Esophagus muscularis mucosa (tissue), 4 donors: ENCODE measurements at regions of chr2 and their contacts with region 1.

Region 1: DNA sequence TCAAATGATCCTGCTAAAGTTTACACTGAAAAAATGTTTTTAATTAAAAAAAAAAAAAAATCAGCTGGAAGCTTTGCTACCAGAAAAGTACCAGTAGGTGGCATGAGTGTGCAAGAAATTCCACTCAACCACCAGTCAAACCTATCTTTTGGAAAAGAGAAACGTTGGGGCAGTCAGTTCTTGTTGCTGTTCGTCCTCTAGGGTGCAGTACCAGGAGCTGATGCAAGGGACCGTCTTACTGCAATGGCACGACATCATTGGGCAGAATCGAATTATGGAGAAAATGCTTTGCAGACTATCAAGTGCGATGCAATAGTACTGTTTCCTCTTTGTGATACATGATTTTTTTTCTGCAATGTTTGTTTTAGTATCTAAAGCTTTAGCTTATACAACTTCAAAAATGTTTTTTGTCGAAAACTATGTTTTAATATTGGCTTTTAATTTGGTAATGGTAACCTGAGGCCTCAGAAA is 18.3 kb downstream of the YPEL5 start:
- DNase-seq: no peak
- H3K4me3 ChIP-seq: no peak overlapping the region
- H3K27ac ChIP-seq: peak overlapping the region in 2 of 4 donors; percentile 17 to 34
- H3K4me1 ChIP-seq: peaks cover 7 to 32% (median 25%) of the 10 kb centered on the region in 4 donors
- H3K27me3 ChIP-seq: no peaks in the 10 kb centered on the region
- CTCF ChIP-seq: peak; percentile 81 to 90 (median 85)
- EP300 ChIP-seq: no peak
- POLR2A ChIP-seq: no peak

Region 2: GRCh38 chr2:30201990-30202389 is 36.9 kb after region 1 on chr2:
- intact Hi-C with region 1: loop called (anchors 5 kb)
- DNase-seq: no peak
- H3K4me3 ChIP-seq: no peak overlapping the region
- H3K27ac ChIP-seq: peak overlapping the region in 3 of 4 donors; percentile 20 to 59 (median 35)
- H3K4me1 ChIP-seq: peaks cover 7 to 22% (median 19%) of the 10 kb centered on the region in 4 donors
- H3K27me3 ChIP-seq: no peaks in the 10 kb centered on the region
- CTCF ChIP-seq: no peak
- EP300 ChIP-seq: no peak
- POLR2A ChIP-seq: no peak

Region 3: DNA sequence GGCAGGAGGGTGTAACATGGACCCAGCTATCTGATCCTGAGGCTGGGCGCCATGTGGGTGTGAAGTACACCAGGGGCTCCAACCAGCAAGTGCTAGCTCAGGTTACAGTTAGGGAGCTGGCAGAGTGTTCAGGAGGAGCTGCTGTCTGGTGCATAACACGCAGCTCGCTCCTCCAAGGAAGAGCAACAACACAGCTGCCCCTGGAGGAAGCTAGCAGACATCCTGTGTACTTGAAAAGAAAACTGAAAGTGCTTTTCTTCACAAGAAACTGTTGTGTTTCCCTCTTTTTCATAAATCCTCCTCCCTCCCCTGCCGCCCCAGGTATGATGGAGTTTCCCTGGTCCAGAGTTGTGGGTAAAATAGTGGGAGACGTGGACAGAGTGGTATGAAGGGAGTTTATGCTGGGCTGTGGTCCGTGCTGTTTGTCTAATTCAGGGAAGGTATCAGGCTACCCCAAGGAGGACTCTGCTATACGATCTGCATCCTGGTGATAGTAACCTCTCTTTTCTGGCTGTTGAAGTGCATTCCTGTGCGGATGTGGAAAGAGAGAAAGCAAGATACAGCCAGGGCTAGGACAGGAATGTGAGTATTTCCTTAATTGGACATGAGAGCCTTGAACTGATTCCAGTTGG is 60.2 kb after region 1 on chr2:
- intact Hi-C with region 1: loop called (anchors 10 kb)
- DNase-seq: no peak
- H3K4me3 ChIP-seq: peak overlapping the region; percentile 39 to 52 (median 44)
- H3K27ac ChIP-seq: peak overlapping the region; percentile 80 to 87 (median 84)
- H3K4me1 ChIP-seq: peaks cover 28 to 40% (median 29%) of the 10 kb centered on the region in 4 donors
- H3K27me3 ChIP-seq: no peaks in the 10 kb centered on the region
- CTCF ChIP-seq: peak in 1 of 3 experiments; percentile 11
- EP300 ChIP-seq: no peak
- POLR2A ChIP-seq: no peak

Region 4: GRCh38 chr2:30310955-30311354 is 145.9 kb after region 1 on chr2:
- intact Hi-C with region 1: no loop called
- DNase-seq: no peak
- H3K4me3 ChIP-seq: no peak overlapping the region
- H3K27ac ChIP-seq: no peak overlapping the region
- H3K4me1 ChIP-seq: no peaks in the 10 kb centered on the region
- H3K27me3 ChIP-seq: no peaks in the 10 kb centered on the region
- CTCF ChIP-seq: no peak
- EP300 ChIP-seq: no peak
- POLR2A ChIP-seq: no peak